ENCODE measurements at regions of chr3 and their contacts with region 1.

Region 1: GRCh38 chr3:42118762-42119361 is 27.7 kb downstream of the TRAK1 start:
- DNase-seq: no peak
- H3K4me3 ChIP-seq: no peak overlapping the region
- H3K27ac ChIP-seq: no peak overlapping the region
- H3K4me1 ChIP-seq: peaks cover 0 to 65% (median 54%) of the 10 kb centered on the region in 4 donors
- H3K27me3 ChIP-seq: no peaks in the 10 kb centered on the region
- CTCF ChIP-seq: peak in 1 of 4 experiments; percentile 18
- EP300 ChIP-seq: no peak
- POLR2A ChIP-seq: no peak

Region 2: DNA sequence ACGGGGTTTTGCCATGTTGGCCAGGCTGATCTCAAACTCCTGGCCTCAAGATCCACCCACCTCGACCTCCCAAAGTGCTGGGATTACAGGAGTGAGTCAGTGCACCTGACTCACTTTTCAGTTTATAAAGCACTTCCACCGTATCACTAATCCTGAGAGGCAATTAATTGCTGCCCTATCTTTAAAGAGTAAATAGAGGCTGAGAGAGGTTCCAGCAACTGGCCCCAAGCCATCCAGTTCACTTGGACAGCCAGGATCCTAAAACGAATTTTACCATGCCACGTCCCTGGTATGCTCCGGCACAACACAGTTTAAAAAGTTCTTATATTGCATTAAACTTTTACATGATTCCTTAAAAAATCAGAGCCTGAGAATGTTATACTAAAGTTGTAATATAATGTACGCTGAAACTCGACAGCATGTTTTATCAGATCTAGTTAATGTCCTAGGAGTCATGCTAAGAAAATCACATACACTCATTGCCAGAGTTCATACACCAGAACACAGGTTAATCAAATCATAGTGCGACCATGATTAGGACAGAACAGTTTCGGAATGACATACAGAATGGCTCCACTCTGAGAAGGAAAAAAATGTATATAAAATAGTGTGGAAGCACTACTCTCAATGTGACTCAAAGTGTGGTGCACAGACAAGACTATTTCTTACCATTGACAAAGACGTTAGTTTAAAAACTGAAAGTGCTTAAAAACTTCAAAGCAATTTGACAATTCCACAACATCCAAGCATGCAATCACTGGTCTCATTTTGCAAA is 282.3 kb before region 1 on chr3:
- intact Hi-C with region 1: no loop called
- DNase-seq: no peak
- H3K4me3 ChIP-seq: no peak overlapping the region
- H3K27ac ChIP-seq: no peak overlapping the region
- H3K4me1 ChIP-seq: no peaks in the 10 kb centered on the region
- H3K27me3 ChIP-seq: no peaks in the 10 kb centered on the region
- CTCF ChIP-seq: no peak
- EP300 ChIP-seq: no peak
- POLR2A ChIP-seq: no peak

Region 3: GRCh38 chr3:41975421-41976103 is 143.3 kb before region 1 on chr3:
- intact Hi-C with region 1: no loop called
- DNase-seq: no peak
- H3K4me3 ChIP-seq: no peak overlapping the region
- H3K27ac ChIP-seq: no peak overlapping the region
- H3K4me1 ChIP-seq: no peaks in the 10 kb centered on the region
- H3K27me3 ChIP-seq: no peaks in the 10 kb centered on the region
- CTCF ChIP-seq: no peak
- EP300 ChIP-seq: no peak
- POLR2A ChIP-seq: no peak

Region 4: DNA sequence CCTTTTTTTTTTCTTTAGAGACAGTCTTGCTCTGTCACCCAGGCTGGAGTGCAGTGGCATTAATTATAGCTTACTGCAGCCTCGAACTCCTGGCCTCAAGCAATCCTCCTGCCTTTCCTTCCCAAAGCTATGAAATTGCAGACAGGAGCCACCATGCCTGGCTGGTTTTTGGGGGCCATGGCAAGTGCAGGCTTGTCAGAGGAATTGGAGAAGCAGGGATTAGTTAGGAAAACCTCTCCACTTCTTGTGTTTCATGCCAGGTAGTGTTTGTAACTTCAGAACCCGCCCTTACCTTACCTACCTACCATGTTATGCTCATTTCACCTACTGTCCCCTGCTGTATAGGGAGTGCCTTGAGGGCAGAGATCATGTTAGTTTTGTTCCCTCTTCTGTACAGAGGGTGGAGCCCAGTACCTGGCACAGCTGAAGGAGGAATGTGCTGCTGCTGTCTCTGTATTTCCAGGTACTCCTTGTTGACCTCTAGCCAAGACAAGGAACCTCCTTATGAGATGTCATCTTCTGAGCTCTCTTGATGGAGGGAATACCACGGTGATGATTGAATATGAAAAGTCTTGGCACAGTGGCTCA is 16.1 kb after region 1 on chr3:
- intact Hi-C with region 1: no loop called
- DNase-seq: no peak
- H3K4me3 ChIP-seq: no peak overlapping the region
- H3K27ac ChIP-seq: no peak overlapping the region
- H3K4me1 ChIP-seq: peaks cover 0 to 2% (median 0%) of the 10 kb centered on the region in 4 donors
- H3K27me3 ChIP-seq: no peaks in the 10 kb centered on the region
- CTCF ChIP-seq: no peak
- EP300 ChIP-seq: no peak
- POLR2A ChIP-seq: no peak

Region 5: GRCh38 chr3:42190701-42191462 is 72.0 kb after region 1 on chr3:
- intact Hi-C with region 1: loop called (anchors 5 kb)
- DNase-seq: peak; percentile 77
- H3K4me3 ChIP-seq: no peak overlapping the region
- H3K27ac ChIP-seq: no peak overlapping the region
- H3K4me1 ChIP-seq: peaks cover 0 to 22% (median 9%) of the 10 kb centered on the region in 4 donors
- H3K27me3 ChIP-seq: no peaks in the 10 kb centered on the region
- CTCF ChIP-seq: peak; percentile 17 to 85 (median 76)
- EP300 ChIP-seq: no peak
- POLR2A ChIP-seq: no peak